ENCODE measurements at regions of chr9 and their contacts with region 1.

Region 1: DNA sequence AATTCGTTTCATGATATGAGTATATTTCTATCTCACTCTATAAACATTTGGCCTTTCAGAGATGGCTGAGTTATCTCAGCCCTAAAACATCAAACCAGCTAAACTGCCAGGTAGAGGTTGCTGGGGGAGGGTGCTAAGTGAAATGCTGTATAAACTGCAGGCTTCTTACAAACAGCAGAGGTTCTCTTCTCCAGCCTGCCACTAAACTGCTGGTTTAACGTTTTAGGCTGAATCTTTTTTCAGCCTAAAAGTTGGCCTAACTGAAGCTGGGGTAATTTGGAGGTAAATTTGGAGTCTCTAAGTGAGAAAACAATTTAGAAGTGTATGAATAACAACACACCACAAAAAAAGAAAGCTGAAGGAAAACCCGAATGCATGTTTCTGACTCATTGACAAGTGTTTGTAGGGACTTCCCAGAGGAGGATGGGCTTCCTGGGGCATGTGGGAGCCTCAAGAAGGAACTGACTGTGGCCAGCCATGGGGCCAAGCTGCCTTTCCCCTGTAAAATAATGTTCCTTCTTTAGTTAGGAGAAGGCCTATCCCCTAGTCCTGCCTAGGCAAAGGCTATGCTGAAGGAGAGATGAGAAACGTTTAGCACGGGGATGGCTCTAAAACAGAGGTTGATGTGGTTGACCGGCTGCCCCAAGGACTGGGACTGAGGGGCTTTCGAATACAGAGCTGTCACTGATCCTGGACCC is 44.3 kb downstream of the SLC28A3 start:
- DNase-seq: no peak
- H3K4me3 ChIP-seq: no peak overlapping the region
- H3K27ac ChIP-seq: no peak overlapping the region
- H3K4me1 ChIP-seq: peaks cover 0 to 4% (median under 1%) of the 10 kb centered on the region in 4 experiments; a peak in 3 of 7 replicates
- H3K27me3 ChIP-seq: no peaks in the 10 kb centered on the region
- CTCF ChIP-seq: no peak
- EP300 ChIP-seq: no peak
- POLR2A ChIP-seq: no peak
- RAD21 ChIP-seq: no peak

Region 2: DNA sequence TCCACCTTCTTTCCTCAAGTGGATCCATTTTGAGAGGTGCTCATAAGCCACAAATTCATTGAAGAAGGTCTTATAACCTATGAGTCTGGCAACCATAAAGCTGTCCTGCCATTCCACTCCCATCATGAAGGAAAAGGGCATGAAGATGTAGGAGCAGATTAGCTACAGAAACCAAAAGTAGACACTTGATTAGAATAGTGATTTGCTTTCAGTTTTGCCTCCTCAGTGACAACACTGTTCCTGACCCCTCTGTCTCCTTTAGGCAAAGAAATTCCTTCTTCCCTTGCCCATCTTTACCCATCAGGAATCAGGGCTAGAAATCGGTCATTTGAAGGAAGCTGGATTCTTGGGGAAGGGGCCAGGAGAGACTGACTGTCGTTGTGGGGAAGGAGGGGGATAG is 10.9 kb before region 1 on chr9:
- CTCF ChIA-PET with region 1: interaction called, 37 read pairs
- POLR2A ChIA-PET with region 1: no interaction called
- DNase-seq: no peak
- H3K4me3 ChIP-seq: no peak overlapping the region
- H3K27ac ChIP-seq: no peak overlapping the region
- H3K4me1 ChIP-seq: no peaks in the 10 kb centered on the region
- H3K27me3 ChIP-seq: no peaks in the 10 kb centered on the region; a peak in 1 of 7 replicates
- CTCF ChIP-seq: no peak
- EP300 ChIP-seq: no peak
- POLR2A ChIP-seq: no peak
- RAD21 ChIP-seq: no peak

Region 3: GRCh38 chr9:84315278-84315877 is 19.1 kb after region 1 on chr9:
- CTCF ChIA-PET with region 1: interaction called, 38 read pairs
- POLR2A ChIA-PET with region 1: no interaction called
- DNase-seq: peak; percentile 41 to 65
- H3K4me3 ChIP-seq: no peak overlapping the region
- H3K27ac ChIP-seq: no peak overlapping the region
- H3K4me1 ChIP-seq: no peaks in the 10 kb centered on the region; a peak in 1 of 7 replicates
- H3K27me3 ChIP-seq: no peaks in the 10 kb centered on the region
- CTCF ChIP-seq: peak; percentile 12 to 71 (median 66)
- EP300 ChIP-seq: no peak
- POLR2A ChIP-seq: no peak
- RAD21 ChIP-seq: peak; percentile 75 to 81